Common myeloid progenitor, CD34-positive (primary cell): ENCODE measurements at regions of chr11 and their contacts with region 1.

Region 1: GRCh38 chr11:82867495-82868082 is 32.6 kb downstream of the PRCP start:
- DNase-seq: peak; percentile 85 to 91 (median 88)
- H3K4me3 ChIP-seq: peak overlapping the region in 3 of 7 experiments; percentile 32 to 63 (median 62)
- H3K27ac ChIP-seq: no peak overlapping the region
- H3K4me1 ChIP-seq: peaks cover 0 to 5% (median 1%) of the 10 kb centered on the region in 4 experiments
- H3K27me3 ChIP-seq: no peaks in the 10 kb centered on the region

Region 2: GRCh38 chr11:82718307-82718706 is 149.3 kb before region 1 on chr11:
- CTCF ChIA-PET with region 1: interaction called, 56 read pairs
- POLR2A ChIA-PET with region 1: no interaction called
- DNase-seq: peak; percentile 26 to 61 (median 58)
- H3K4me3 ChIP-seq: no peak overlapping the region
- H3K27ac ChIP-seq: no peak overlapping the region
- H3K4me1 ChIP-seq: no peaks in the 10 kb centered on the region
- H3K27me3 ChIP-seq: peaks cover 0 to 2% (median 0%) of the 10 kb centered on the region in 5 experiments

Region 3: DNA sequence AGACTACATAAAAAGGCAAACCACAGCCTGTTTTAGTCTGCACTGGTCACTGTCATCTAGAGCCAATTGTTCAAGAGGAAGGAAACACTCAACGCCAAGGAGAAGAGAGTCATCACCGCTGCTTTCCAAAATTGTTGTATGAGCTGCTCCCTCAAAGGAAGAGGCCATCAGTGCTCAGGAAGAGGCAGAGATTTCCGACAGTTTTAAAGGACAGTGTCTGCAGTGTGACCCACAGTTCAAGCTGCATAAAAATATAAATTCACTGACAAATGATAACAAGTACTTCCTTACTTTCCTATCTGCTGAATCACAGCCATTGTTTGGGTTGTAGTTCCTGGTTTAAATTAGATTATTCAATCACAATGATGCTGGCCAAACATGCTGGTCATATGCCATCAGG is 16.3 kb after region 1 on chr11:
- CTCF ChIA-PET with region 1: interaction called, 24 read pairs
- POLR2A ChIA-PET with region 1: no interaction called
- DNase-seq: no peak
- H3K4me3 ChIP-seq: no peak overlapping the region
- H3K27ac ChIP-seq: no peak overlapping the region
- H3K4me1 ChIP-seq: peaks cover under 1 to 10% (median 7%) of the 10 kb centered on the region in 4 experiments
- H3K27me3 ChIP-seq: no peaks in the 10 kb centered on the region

Region 4: GRCh38 chr11:82889133-82890001 is 21.8 kb after region 1 on chr11:
- CTCF ChIA-PET with region 1: interaction called, 24 read pairs
- POLR2A ChIA-PET with region 1: no interaction called
- DNase-seq: peak in 2 of 3 donors; percentile 46 to 58
- H3K4me3 ChIP-seq: peak overlapping the region in 2 of 7 experiments; percentile 11 to 38
- H3K27ac ChIP-seq: no peak overlapping the region
- H3K4me1 ChIP-seq: peaks cover 14 to 29% (median 20%) of the 10 kb centered on the region in 4 experiments
- H3K27me3 ChIP-seq: no peaks in the 10 kb centered on the region

Region 5: GRCh38 chr11:82900277-82901164 is 32.9 kb after region 1 on chr11 and contains the start of gene PRCP:
- CTCF ChIA-PET with region 1: interaction called, 43 read pairs
- POLR2A ChIA-PET with region 1: interaction called, 3 read pairs
- DNase-seq: peak; percentile 91 to 95 (median 95)
- H3K4me3 ChIP-seq: peak within 1 kb of the TSS; percentile 69 to 94 (median 78)
- H3K27ac ChIP-seq: peak within 1 kb of the TSS; percentile 88 to 94
- H3K4me1 ChIP-seq: peaks cover 13 to 52% (median 38%) of the 10 kb centered on the region in 4 experiments
- H3K27me3 ChIP-seq: no peaks in the 10 kb centered on the region

Region 6: DNA sequence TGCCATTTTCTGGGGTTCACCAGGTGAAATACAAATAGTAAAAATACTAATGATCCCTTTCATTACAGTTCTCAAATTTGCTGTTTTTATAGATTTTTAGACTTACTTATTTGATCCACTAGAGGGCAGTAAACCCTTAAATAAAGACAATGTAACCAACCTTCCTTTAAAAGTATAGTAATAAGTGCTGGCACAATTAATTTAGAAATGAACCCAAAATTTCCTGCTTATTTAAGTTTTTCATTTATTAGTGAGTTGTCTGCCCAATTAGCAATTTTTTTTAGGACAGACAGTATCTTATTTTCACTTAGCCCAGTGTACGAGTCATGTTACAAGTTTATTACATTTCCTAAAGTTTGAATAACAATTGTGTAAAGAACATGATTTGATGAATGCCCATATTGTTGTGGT is 38.7 kb after region 1 on chr11:
- CTCF ChIA-PET with region 1: interaction called, 43 read pairs
- POLR2A ChIA-PET with region 1: interaction called, 3 read pairs
- DNase-seq: peak in 2 of 3 donors; percentile 51 to 55
- H3K4me3 ChIP-seq: no peak overlapping the region
- H3K27ac ChIP-seq: no peak overlapping the region
- H3K4me1 ChIP-seq: peaks cover 3 to 14% (median 11%) of the 10 kb centered on the region in 4 experiments
- H3K27me3 ChIP-seq: no peaks in the 10 kb centered on the region